Stomach (tissue), 19 donors: ENCODE measurements at regions of chr6 and their contacts with region 1.

Region 1: DNA sequence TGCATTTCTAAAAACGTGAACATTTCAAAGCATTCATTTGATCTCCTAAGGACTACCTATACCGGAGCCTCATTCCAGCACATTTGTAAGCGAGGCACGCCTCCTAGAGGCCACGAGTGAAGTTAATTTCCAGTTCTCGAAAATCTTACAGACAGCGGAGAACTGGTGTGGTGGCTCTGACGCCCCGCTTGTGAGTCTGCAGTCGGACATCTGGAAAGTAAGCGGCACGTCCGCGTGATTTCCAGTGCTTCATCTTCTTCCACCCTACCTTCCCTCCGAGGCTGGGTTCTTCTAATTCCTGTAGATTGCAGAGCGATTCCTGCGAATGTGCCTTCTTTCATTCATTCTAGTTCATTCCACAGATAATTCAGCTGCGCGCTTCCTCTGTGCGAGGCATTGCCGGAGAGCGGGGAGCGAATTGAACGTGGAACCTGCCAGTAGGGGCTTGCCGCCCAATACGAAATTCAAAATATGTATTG is 810 bp upstream of the PRIM2 start:
- DNase-seq: peak; percentile 81 to 96
- H3K4me3 ChIP-seq: peak overlapping the region; percentile 58 to 84 (median 64)
- H3K27ac ChIP-seq: peak overlapping the region in 4 of 5 donors; percentile 52 to 84 (median 74)
- H3K4me1 ChIP-seq: peaks cover 0 to 41% (median 29%) of the 10 kb centered on the region in 4 donors
- H3K27me3 ChIP-seq: no peaks in the 10 kb centered on the region
- CTCF ChIP-seq: peak in 5 of 7 experiments; percentile 51 to 85 (median 72)
- EP300 ChIP-seq: no peak
- POLR2A ChIP-seq: no peak

Region 2: GRCh38 chr6:56902641-56903464 is 413.8 kb before region 1 on chr6:
- intact Hi-C with region 1: loop called (anchors 5 kb)
- DNase-seq: peak in 1 of 2 donors; percentile 74
- H3K4me3 ChIP-seq: no peak overlapping the region
- H3K27ac ChIP-seq: peak overlapping the region in 1 of 5 donors; percentile 27
- H3K4me1 ChIP-seq: peaks cover 0 to 10% (median 6%) of the 10 kb centered on the region in 4 donors
- H3K27me3 ChIP-seq: no peaks in the 10 kb centered on the region
- CTCF ChIP-seq: peak in 4 of 7 experiments; percentile 51 to 79 (median 62)
- EP300 ChIP-seq: no peak
- POLR2A ChIP-seq: no peak

Region 3: DNA sequence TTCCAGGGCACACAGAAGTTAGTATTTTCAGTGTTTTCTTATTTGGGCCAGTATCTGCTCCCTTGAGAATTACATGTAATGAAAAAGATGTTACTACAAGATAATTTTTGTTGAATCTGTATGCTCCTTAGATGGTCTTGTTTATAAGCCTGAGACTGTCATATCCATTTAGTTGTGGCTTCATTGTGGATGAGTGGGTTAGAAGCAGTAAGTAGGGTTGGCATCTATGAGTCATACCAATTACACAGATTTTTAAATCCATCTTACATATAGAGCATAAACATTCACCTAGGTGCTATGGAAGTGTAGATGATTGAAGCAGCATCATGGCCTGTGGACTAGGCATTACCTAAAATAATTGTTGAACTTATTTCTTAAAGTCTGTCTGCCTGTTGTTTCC is 158.0 kb before region 1 on chr6:
- intact Hi-C with region 1: no loop called
- DNase-seq: no peak
- H3K4me3 ChIP-seq: no peak overlapping the region
- H3K27ac ChIP-seq: no peak overlapping the region
- H3K4me1 ChIP-seq: no peaks in the 10 kb centered on the region
- H3K27me3 ChIP-seq: no peaks in the 10 kb centered on the region
- CTCF ChIP-seq: no peak
- EP300 ChIP-seq: no peak
- POLR2A ChIP-seq: no peak

Region 4: GRCh38 chr6:57216235-57217101 is 100.2 kb before region 1 on chr6:
- intact Hi-C with region 1: loop called (anchors 10 kb)
- DNase-seq: peak in 1 of 2 donors; percentile 35
- H3K4me3 ChIP-seq: no peak overlapping the region
- H3K27ac ChIP-seq: no peak overlapping the region
- H3K4me1 ChIP-seq: peaks cover 0 to 23% (median 8%) of the 10 kb centered on the region in 4 donors
- H3K27me3 ChIP-seq: no peaks in the 10 kb centered on the region
- CTCF ChIP-seq: peak in 1 of 7 experiments; percentile 31
- EP300 ChIP-seq: no peak
- POLR2A ChIP-seq: no peak

Region 5: DNA sequence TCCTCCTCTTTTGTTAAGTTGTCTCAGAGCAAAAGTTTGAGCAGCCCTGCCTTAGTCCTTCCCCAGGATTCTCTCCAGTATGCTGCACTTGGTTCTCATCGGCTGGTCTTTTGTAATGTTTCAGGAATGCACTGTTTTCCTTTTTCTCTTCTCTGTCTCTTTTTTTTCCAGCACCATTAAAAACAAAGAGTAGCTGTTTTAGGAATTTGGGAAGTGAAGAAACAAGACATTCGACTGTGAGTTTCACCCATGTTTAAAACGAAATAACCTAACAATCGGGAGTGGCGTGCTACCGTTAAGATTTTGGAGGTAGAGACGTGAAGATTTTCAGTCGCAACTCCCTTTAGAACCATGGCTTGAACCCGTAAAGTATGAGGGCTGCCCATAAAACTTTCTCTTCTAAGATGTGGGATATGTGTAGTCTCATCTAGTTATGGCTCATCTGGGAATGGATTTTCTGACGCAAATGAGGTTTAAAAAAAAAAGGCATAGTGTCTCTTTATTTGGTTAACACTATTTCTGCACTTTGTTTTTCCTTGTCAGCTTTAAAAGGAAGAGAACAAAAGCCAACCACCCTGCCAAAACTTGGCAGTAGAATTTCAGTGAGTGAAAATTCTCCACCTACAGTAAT is 58.6 kb before region 1 on chr6:
- intact Hi-C with region 1: no loop called
- DNase-seq: peak in 1 of 2 donors; percentile 47
- H3K4me3 ChIP-seq: peak overlapping the region in 1 of 4 donors; percentile 22
- H3K27ac ChIP-seq: peak overlapping the region in 4 of 5 donors; percentile 76 to 86 (median 76)
- H3K4me1 ChIP-seq: peaks cover 0 to 27% (median 8%) of the 10 kb centered on the region in 4 donors
- H3K27me3 ChIP-seq: no peaks in the 10 kb centered on the region
- CTCF ChIP-seq: no peak
- EP300 ChIP-seq: no peak
- POLR2A ChIP-seq: no peak